SK-N-SH (cell line): ENCODE measurements at regions of chr1 and their contacts with region 1.

Region 1: DNA sequence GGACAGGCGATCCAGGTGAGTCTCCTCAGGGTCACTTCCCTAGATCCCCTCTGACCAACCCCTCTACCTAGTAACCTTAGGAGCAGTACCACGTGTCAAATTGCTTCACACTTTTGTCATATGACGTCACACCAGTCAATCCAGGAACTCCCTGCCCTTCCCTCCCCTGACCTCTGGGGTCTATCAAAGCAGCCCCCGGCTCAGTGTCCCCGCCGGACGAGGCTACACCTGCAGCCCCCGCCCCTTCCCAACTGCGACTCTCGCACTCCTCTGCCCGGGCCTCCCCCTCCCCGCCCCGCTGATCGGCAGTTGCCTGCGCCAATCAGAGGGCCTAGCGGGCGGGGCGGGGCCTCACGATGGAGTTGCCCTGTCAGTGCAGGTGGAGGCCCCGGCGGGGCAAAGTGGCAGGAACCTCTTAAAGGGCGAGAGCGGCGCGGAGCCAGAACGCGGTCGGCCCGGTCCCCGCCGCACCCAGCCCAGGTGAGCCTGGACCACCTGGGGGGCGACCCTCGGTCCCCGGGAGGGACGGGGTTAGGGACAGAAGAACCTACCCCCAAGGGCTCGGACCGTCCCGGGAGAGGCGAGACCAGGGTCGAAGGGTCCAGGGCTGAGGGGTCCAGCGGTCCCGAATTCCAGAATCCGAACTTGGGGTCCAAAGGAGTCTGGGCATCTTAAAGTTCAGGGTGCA is 27.5 kb upstream of the EPB41 start:
- DNase-seq: peak; percentile 99
- H3K4me3 ChIP-seq: peak overlapping the region; percentile 77 to 85
- H3K27ac ChIP-seq: peak overlapping the region in 1 of 2 experiments; percentile 17; a peak in 1 of 4 replicates
- H3K4me1 ChIP-seq: peaks cover 18 to 34% of the 10 kb centered on the region in 2 experiments; a peak in 2 of 4 replicates
- H3K27me3 ChIP-seq: no peaks in the 10 kb centered on the region
- CTCF ChIP-seq: no peak
- EP300 ChIP-seq: no peak
- RAD21 ChIP-seq: no peak

Region 2: DNA sequence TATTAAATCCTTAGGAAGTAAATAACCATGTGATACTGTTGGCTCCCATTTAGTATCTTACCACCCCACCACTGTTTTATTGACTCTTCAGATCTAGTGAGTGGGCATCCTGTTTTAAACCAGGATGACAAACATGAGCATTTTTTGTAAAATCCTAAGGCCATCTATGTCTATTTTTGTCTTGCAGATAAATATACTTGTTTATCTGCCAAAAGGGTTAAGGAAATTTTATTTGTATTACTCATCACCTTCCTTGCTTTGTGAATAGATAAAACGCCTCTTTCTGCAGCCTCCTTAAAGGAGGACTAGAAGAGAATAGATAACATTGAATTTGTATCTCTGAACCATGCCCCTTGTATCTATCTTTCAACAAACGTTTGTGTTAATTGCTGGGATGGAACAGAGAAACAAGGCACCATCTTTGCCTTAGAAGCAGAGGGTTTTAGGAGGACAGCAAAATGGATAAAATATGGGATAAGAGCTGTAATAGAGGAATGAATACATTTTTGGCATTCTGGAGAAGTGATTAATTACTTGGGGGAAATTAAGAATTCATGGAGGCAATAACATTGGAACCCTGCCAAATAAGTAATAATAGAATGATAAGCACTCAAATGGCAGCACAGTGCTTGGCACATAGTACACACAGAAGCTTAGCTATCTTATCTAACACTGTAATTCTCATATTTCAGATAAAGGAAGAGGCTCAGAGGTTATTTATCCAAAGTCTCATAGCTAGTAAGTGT is 135.4 kb before region 1 on chr1:
- CTCF ChIA-PET with region 1: no interaction called
- POLR2A ChIA-PET with region 1: no interaction called
- DNase-seq: no peak
- H3K4me3 ChIP-seq: no peak overlapping the region
- H3K27ac ChIP-seq: peak overlapping the region in 1 of 2 experiments; percentile 51; a peak in 2 of 4 replicates
- H3K4me1 ChIP-seq: peaks cover 2 to 30% of the 10 kb centered on the region in 2 experiments; a peak in 3 of 4 replicates
- H3K27me3 ChIP-seq: no peaks in the 10 kb centered on the region
- CTCF ChIP-seq: no peak
- EP300 ChIP-seq: no peak
- RAD21 ChIP-seq: no peak

Region 3: DNA sequence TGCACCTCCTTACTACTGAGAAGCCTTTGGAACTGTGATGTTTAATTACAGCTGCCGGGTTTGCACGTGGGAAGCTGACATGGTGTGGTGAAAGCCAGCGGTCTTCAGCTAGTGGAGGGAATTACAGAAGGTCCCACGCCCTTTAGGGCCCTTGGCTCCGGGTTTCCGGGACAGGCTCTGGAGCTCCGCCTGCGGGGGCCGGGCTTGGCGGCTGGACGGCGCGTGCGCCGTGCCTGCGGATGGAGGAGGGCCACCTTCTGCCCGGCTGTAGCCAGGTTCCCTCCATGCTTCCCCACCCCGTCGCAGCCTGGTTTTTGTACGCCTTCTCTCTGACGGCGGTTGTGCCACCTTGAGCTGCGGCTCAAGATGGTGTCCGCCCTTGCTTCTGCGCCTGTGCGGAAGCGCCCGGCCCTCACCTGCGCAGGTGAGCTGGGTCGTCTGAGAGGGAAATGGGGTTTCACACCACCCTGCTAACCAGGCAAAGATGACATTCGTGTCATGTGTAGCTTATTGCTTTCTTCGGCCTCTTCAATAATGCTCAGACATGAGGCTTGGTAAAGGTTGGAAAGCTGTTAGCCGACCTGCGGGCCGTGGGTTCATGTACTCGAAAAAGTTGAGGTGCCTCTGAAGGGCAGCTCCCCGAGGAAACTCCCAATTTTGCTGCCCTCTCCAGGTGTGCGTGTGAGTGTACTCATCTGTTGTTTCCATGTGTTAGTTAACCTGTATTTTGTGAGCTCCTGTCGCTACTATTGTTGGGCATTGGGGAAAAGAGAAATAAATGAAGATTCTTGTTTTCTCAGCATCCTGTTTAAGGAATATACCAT is 111.5 kb before region 1 on chr1:
- CTCF ChIA-PET with region 1: interaction called, 894 read pairs
- POLR2A ChIA-PET with region 1: no interaction called
- DNase-seq: no peak
- H3K4me3 ChIP-seq: no peak overlapping the region
- H3K27ac ChIP-seq: no peak overlapping the region
- H3K4me1 ChIP-seq: no peaks in the 10 kb centered on the region
- H3K27me3 ChIP-seq: no peaks in the 10 kb centered on the region
- CTCF ChIP-seq: no peak
- EP300 ChIP-seq: no peak
- RAD21 ChIP-seq: no peak

Region 4: DNA sequence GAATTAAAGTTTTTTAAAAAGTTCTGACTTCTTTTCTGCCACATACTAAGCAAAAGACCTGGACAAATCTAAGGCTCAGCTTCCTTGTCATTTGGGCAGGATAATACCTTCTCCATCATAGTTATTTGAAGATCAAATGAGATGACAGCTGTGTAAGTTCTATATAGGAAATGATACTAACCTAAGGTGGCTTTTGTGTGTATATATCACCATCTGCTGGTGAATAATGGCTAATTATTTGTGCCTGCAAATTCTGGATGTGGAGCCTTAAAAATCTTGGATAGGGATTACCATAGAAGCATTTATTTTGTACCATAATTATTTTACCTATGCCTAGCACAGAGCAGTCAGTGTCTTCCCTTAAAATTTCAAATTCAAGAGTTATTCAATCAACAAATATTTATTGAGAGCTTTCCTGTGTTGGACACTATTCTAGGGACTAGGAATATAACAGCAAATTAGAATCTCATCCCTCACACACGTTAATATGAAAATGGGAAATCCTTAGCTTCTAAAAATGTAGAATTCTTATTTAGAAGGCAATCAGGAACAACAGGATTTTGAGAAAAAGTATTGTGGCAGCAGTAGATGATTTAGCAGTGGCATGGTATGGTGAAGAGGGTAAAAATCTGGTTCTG is 147.1 kb after region 1 on chr1:
- CTCF ChIA-PET with region 1: interaction called, 737 read pairs
- POLR2A ChIA-PET with region 1: interaction called, 3 read pairs
- DNase-seq: peak; percentile 61
- H3K4me3 ChIP-seq: no peak overlapping the region
- H3K27ac ChIP-seq: no peak overlapping the region
- H3K4me1 ChIP-seq: peaks cover 0 to 2% of the 10 kb centered on the region in 2 experiments; a peak in 2 of 4 replicates
- H3K27me3 ChIP-seq: no peaks in the 10 kb centered on the region
- CTCF ChIP-seq: peak; percentile 83
- EP300 ChIP-seq: no peak
- RAD21 ChIP-seq: peak; percentile 96

Region 5: DNA sequence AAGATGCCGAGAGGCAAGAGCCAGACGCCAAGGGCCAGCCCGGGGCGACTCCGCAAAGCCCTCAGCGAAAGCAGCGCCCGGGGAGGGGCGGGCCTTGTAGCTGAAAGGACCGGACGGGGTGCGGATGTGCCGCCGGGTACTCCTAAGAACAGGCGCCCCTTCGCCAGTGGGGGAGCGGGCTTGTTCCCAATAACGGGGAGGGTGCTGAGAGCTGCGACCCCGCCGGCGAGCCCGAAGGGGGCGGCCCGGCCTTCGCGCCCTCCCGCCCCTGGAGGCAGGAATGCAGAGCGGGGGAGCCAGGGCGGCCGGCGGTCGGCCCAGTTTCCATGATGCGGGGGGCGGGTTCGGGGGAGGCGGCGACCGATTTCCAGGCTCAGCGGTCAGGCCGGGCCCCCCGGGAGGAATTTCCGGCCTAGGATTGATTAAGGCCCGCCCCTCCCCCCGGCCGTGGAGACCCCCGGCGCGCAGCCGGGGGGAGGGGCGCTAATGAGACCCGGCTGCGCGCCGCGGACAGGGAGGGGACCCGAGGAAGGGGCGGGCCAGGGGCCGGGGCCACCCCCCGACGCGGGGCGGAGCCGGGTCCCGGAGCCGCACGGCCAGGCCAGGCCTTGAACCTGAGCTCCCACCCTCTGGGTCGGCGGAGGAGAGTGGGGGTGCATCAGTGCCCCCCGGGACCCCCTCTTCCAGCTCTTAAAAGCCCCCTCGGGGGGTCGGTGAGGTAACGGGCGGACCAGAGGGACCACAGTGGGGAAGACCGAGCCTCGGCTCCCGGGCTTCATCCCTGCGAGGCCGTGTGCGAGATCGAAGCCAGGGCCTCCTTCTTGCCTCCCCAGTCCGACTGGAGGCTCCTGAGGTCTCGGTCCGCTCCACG is 237.7 kb after region 1 on chr1:
- CTCF ChIA-PET with region 1: interaction called, 15 read pairs
- POLR2A ChIA-PET with region 1: interaction called, 3 read pairs
- DNase-seq: peak; percentile 96
- H3K4me3 ChIP-seq: peak overlapping the region; percentile 69 to 71
- H3K27ac ChIP-seq: peak overlapping the region; percentile 43 to 55; a peak in 3 of 4 replicates
- H3K4me1 ChIP-seq: peaks cover 0 to 9% of the 10 kb centered on the region in 2 experiments; a peak in 1 of 4 replicates
- H3K27me3 ChIP-seq: no peaks in the 10 kb centered on the region
- CTCF ChIP-seq: peak; percentile 71
- EP300 ChIP-seq: no peak
- RAD21 ChIP-seq: no peak

Region 6: DNA sequence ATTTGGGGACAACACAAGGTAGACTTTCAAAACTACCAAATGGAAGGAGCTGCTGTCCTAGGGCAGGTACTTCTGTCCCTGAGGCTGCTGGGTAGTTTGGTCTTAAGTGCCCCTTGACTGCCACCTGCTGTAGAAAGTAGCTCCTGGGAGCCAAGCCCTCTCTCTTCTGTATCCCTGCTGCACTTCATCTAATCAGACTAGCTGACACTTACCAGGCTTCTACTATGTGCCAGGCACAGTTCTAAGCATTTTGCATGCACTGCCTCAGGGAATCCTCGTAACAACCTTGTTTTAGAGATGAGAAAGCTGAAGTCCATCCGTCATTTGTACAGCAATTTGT is 310.7 kb after region 1 on chr1:
- CTCF ChIA-PET with region 1: interaction called, 95 read pairs
- POLR2A ChIA-PET with region 1: no interaction called
- DNase-seq: peak; percentile 61
- H3K4me3 ChIP-seq: no peak overlapping the region
- H3K27ac ChIP-seq: peak overlapping the region in 1 of 2 experiments; percentile 71; a peak in 2 of 4 replicates
- H3K4me1 ChIP-seq: peaks cover 16 to 18% of the 10 kb centered on the region in 2 experiments; a peak in 2 of 4 replicates
- H3K27me3 ChIP-seq: no peaks in the 10 kb centered on the region
- CTCF ChIP-seq: peak; percentile 57
- EP300 ChIP-seq: no peak
- RAD21 ChIP-seq: peak; percentile 58

Region 7: GRCh38 chr1:29621826-29622435 is 735.1 kb after region 1 on chr1:
- CTCF ChIA-PET with region 1: no interaction called
- POLR2A ChIA-PET with region 1: no interaction called
- DNase-seq: no peak
- H3K4me3 ChIP-seq: no peak overlapping the region
- H3K27ac ChIP-seq: no peak overlapping the region
- H3K4me1 ChIP-seq: peaks cover 0 to 7% of the 10 kb centered on the region in 2 experiments; a peak in 1 of 4 replicates
- H3K27me3 ChIP-seq: no peaks in the 10 kb centered on the region
- CTCF ChIP-seq: no peak
- EP300 ChIP-seq: no peak
- RAD21 ChIP-seq: no peak